Colonic mucosa (tissue), 4 donors: ENCODE measurements at regions of chr16 and their contacts with region 1.

Region 1: DNA sequence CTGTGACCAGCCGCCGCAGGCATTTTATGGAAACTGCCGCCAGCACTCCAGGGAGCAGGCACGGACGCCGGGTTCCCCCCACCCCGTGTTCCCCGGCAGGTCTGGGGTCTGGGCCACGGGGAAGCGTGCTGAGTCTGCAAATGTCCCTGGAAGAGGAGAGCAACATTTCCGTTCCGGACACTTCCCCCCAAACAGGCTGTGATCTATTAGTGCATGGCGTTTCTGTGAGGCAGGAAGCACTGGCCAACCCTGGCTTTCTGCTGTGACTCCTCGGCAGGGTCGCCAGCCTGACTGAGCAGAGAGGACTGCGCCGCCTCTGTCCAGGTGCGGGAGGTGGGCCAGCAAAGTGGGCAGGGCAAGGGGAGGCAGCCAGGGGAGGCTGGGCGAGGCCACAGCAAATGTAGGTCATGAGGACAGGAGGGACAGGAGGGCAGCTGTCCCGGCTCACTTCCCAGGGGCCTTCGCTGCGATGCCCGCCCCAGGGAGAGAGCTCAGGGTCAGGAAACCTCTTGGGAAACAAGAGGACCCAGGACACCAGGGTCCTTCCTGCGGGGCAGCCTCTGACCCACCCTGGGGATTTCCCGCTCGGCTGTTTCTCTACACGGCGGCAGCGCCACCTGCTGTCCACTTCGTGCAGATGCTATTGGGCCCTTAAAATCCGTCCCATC is 9.5 kb downstream of the FOXF1 start:
- DNase-seq: peak; percentile 57
- H3K4me3 ChIP-seq: no peak overlapping the region
- H3K27ac ChIP-seq: peak overlapping the region; percentile 18
- H3K4me1 ChIP-seq: no peaks in the 10 kb centered on the region
- H3K27me3 ChIP-seq: peaks cover 30% of the 10 kb centered on the region
- CTCF ChIP-seq: peak; percentile 90

Region 2: DNA sequence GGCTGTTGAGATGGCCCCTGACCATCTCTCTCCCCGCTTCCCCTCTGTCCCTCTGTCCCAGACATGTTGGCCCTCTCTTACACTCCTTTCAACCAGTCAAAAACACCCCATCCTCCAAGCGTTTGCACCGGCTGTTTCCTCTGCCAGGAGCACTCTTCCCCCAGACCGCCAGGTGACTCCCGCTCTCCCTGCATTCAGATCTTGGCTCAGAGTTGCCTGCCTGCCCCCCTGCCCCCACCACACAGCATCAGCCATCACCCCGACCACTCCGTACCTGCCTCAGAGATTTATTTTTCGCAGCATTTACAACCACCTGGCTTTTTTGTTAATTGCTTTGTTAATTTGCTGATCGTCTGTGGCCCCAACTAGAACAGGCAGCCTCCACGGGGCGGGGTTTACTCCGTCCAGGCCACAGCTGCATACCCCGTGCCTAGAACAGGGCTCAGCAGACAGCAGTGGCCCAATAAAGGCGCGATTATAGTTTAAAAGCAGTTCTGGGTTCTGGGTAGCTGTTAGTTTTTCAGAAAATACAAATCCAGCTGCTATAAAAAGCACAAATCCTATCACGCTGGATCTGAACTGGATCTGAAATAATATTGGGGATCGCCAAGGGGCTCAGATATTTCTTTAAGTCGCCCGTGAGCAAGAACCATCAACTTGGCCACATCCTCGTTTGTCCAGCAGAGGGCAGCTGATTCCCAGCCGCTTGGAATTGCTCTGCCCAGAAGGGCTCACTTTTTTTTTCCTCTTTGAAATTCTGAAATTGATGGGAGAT is 447.3 kb before region 1 on chr16:
- intact Hi-C with region 1: loop called (anchors 2 kb)
- DNase-seq: peak; percentile 64
- H3K4me3 ChIP-seq: no peak overlapping the region
- H3K27ac ChIP-seq: no peak overlapping the region
- H3K4me1 ChIP-seq: no peaks in the 10 kb centered on the region
- H3K27me3 ChIP-seq: no peaks in the 10 kb centered on the region
- CTCF ChIP-seq: peak; percentile 73

Region 3: GRCh38 chr16:86134802-86135461 is 384.9 kb before region 1 on chr16:
- intact Hi-C with region 1: no loop called
- DNase-seq: no peak
- H3K4me3 ChIP-seq: no peak overlapping the region
- H3K27ac ChIP-seq: no peak overlapping the region
- H3K4me1 ChIP-seq: no peaks in the 10 kb centered on the region
- H3K27me3 ChIP-seq: no peaks in the 10 kb centered on the region
- CTCF ChIP-seq: no peak

Region 4: GRCh38 chr16:86195863-86196630 is 323.7 kb before region 1 on chr16:
- intact Hi-C with region 1: loop called (anchors 10 kb)
- DNase-seq: no peak
- H3K4me3 ChIP-seq: no peak overlapping the region
- H3K27ac ChIP-seq: peak overlapping the region; percentile 70
- H3K4me1 ChIP-seq: no peaks in the 10 kb centered on the region
- H3K27me3 ChIP-seq: peaks cover 5% of the 10 kb centered on the region
- CTCF ChIP-seq: no peak

Region 5: DNA sequence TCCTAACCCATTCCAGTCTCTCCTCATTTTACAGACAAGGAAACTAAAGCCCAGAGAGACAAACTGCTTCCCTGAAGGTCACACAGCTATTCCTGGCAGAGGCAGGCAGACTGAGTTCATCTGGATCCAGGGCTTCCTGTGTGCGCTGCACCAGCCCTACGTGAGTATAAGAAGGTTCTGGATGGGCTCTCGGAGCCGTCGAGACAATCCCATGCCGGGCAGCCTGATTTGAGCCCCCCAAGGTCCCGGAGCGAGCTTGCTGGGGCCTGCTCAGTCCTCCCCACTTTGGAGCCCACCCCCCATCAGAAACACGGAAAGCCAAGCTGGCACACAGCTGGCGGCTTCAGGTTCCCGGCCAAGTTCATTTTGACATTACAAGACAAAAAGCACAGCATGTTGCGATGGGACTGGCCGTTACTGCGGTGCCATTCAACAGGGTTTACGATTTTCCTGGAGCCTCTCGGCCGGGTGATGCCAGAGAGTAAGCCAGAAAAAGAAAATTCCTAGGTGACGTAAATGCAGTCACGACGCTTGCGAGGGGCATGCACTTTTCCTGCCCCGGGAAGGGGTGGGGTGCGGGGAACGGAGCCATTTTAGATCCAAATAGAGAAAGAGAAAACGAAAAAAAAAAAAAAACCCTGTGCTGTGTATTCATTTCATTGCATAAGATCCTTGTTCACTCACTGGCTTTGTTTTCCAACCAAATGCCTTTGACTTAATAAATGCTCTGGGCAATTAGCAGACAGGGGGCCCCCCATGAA is 176.6 kb before region 1 on chr16:
- intact Hi-C with region 1: loop called (anchors 2 kb)
- DNase-seq: peak; percentile 50
- H3K4me3 ChIP-seq: no peak overlapping the region
- H3K27ac ChIP-seq: peak overlapping the region; percentile 69
- H3K4me1 ChIP-seq: no peaks in the 10 kb centered on the region
- H3K27me3 ChIP-seq: no peaks in the 10 kb centered on the region
- CTCF ChIP-seq: no peak

Region 6: GRCh38 chr16:86414991-86415740 is 104.6 kb before region 1 on chr16:
- intact Hi-C with region 1: no loop called
- DNase-seq: no peak
- H3K4me3 ChIP-seq: no peak overlapping the region
- H3K27ac ChIP-seq: no peak overlapping the region
- H3K4me1 ChIP-seq: no peaks in the 10 kb centered on the region
- H3K27me3 ChIP-seq: no peaks in the 10 kb centered on the region
- CTCF ChIP-seq: no peak

Region 7: DNA sequence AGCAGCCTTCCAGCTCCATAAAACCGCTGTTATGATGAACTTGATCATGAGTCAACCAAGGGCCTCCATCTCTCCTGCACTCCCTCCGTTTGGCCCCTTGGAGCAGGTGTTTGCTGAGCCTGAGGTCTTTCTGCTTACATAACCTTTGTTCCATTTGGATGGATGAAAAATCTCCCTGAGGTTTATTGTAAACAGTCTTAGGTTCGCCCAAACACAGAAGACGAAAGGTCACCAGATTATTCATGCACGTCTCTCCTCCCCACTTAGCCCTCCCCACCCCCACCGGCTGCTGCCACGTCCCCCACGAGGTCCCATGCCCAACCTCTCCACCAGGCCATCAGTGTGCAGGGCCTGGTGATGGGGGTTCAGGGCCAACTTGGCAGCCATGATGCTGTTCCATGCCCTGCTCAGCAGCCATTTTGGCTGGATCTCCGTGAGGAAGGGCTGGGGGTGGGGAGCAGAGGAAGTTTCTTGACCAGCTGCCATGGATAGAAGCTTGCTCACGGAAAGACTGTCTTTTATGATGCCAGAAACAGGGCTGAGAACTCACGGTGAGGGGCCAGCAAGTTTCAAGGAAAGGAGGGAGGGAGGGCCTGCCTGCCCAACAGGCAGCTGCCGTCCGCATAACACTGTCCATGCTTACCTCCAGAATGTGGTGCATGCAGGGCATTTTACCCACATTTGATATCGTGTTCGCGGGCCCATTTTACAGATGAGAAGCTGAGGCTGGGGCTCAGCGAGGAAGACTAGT is 57.3 kb before region 1 on chr16:
- intact Hi-C with region 1: no loop called
- DNase-seq: peak; percentile 25
- H3K4me3 ChIP-seq: no peak overlapping the region
- H3K27ac ChIP-seq: peak overlapping the region; percentile 47
- H3K4me1 ChIP-seq: no peaks in the 10 kb centered on the region
- H3K27me3 ChIP-seq: no peaks in the 10 kb centered on the region
- CTCF ChIP-seq: no peak